BJ (cell line): ENCODE measurements at regions of chr3 and their contacts with region 1.

Region 1: DNA sequence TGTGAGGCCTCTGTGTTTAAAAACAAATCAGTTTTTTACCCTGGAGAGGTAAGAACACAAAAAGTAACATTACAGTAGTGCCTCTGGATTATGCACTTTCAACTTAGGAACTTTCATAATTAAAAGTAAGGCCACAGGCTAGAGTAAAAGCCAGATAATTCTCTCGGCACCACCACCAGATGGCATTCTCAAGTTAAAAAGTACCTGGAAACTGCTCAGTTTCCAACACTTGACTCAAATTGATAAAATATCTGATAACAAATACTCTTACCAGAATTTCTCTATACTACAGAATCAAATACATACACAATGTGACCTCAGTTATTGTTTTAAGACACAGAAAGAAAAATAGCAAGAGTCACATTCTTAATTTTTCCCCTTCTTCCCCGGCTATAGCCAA is 19.9 kb downstream of the SPICE1 start:
- DNase-seq: no peak
- H3K4me3 ChIP-seq: no peak overlapping the region
- H3K27me3 ChIP-seq: no peaks in the 10 kb centered on the region
- CTCF ChIP-seq: peak; percentile 46

Region 2: GRCh38 chr3:113354307-113354706 is 140.7 kb before region 1 on chr3:
- CTCF ChIA-PET with region 1: no interaction called
- POLR2A ChIA-PET with region 1: no interaction called
- DNase-seq: no peak
- H3K4me3 ChIP-seq: no peak overlapping the region
- H3K27me3 ChIP-seq: no peaks in the 10 kb centered on the region
- CTCF ChIP-seq: no peak

Region 3: GRCh38 chr3:113626503-113627371 is 131.7 kb after region 1 on chr3:
- CTCF ChIA-PET with region 1: interaction called, 14 read pairs
- POLR2A ChIA-PET with region 1: no interaction called
- DNase-seq: no peak
- H3K4me3 ChIP-seq: no peak overlapping the region
- H3K27me3 ChIP-seq: peaks cover 11% of the 10 kb centered on the region
- CTCF ChIP-seq: peak; percentile 91